ENCODE measurements at regions of chr3 and their contacts with region 1.

Region 1: DNA sequence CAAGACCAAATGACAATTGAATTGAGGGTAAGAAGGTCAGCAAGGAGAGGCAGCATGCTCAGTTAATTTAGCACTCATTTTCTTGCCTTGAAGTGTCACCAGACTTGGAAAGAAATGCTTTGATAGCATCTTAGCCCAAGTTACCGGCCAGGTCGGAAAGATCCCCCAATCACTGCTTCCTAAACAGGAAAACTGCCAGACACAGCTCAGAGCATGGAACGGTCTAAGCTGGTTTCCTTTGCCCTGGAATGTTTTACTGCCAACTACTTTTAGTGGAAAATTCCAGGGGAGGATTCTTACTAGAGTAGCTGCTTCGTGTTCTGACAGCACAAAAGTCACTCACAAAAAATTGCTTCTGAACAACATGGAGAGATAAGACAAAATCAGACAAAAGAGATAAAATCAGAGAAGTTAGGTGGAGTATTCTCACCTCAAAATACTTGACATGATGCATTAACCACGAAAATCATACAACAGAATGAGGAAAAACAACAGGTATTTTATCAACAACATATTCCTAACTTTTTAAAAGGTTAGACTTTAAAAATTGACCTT is 65.5 kb downstream of the CCR4 start:
- DNase-seq: no peak
- H3K4me3 ChIP-seq: no peak overlapping the region
- H3K4me3 Mint-ChIP-seq: peak overlapping the region; percentile 28 to 79 (median 55)
- H3K27ac ChIP-seq: peak overlapping the region; percentile 11
- H3K27ac Mint-ChIP-seq: peak overlapping the region; percentile 2 to 96 (median 82)
- H3K4me1 ChIP-seq: peaks cover 71% of the 10 kb centered on the region
- H3K4me1 Mint-ChIP-seq: peaks cover 58 to 96% (median 77%) of the 10 kb centered on the region in 4 donors
- H3K27me3 ChIP-seq: no peaks in the 10 kb centered on the region
- H3K27me3 Mint-ChIP-seq: no peaks in the 10 kb centered on the region

Region 2: DNA sequence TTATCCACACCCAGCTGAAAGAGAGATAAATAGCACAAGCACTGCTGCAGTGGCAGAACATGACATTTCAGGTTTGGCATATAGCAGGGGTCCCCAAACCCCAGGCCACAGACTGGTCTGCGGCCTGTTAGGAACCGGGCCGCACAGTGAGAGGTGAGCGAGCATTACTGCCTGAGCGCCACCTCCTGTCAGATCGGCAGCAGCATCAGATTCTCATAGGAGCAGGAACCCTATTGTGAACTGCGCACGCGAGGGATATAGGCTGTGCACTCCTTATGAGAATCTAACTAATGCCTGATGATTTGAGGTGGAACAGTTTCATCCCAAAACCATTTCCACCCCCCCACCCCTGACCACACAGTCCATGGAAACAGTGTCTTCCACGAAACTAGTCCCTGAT is 10.8 kb before region 1 on chr3:
- CTCF ChIA-PET with region 1: interaction called, 10 read pairs
- POLR2A ChIA-PET with region 1: interaction called, 20 read pairs
- intact Hi-C with region 1: loop called (anchors 1 kb)
- DNase-seq: peak; percentile 27 to 61 (median 51)
- H3K4me3 ChIP-seq: no peak overlapping the region
- H3K4me3 Mint-ChIP-seq: peak overlapping the region in 7 of 8 donors; percentile 20 to 62 (median 40)
- H3K27ac ChIP-seq: peak overlapping the region; percentile 0
- H3K27ac Mint-ChIP-seq: peak overlapping the region; percentile 73 to 94 (median 86)
- H3K4me1 ChIP-seq: peaks cover 78% of the 10 kb centered on the region
- H3K4me1 Mint-ChIP-seq: peaks cover 41 to 81% (median 66%) of the 10 kb centered on the region in 4 donors
- H3K27me3 ChIP-seq: no peaks in the 10 kb centered on the region
- H3K27me3 Mint-ChIP-seq: no peaks in the 10 kb centered on the region

Region 3: DNA sequence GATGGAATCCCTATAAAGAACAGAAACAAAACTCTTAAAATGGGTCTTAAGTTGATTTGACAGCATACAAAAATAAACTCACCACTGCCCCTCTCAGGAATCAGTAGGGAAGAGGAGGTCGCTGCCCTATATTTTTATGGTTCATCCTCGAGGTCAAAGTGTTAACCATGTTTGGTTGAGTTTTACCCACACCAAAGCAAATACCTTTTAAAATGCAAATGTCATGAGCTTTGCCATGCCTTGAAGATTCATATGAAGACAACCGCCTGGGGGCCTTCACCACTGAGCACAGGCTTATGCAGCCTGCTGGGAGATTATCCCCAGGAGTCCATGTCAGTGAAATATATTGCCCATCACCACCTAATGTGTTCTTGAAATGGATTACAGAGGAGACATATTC is 13.9 kb after region 1 on chr3:
- CTCF ChIA-PET with region 1: interaction called, 13 read pairs
- POLR2A ChIA-PET with region 1: interaction called, 7 read pairs
- intact Hi-C with region 1: no loop called
- DNase-seq: peak; percentile 58 to 77 (median 72)
- H3K4me3 ChIP-seq: no peak overlapping the region
- H3K4me3 Mint-ChIP-seq: peak overlapping the region in 7 of 8 donors; percentile 32 to 73 (median 54)
- H3K27ac ChIP-seq: no peak overlapping the region
- H3K27ac Mint-ChIP-seq: peak overlapping the region; percentile 52 to 94 (median 83)
- H3K4me1 ChIP-seq: peaks cover 29% of the 10 kb centered on the region
- H3K4me1 Mint-ChIP-seq: peaks cover 24 to 49% (median 31%) of the 10 kb centered on the region in 4 donors
- H3K27me3 ChIP-seq: no peaks in the 10 kb centered on the region
- H3K27me3 Mint-ChIP-seq: no peaks in the 10 kb centered on the region

Region 4: DNA sequence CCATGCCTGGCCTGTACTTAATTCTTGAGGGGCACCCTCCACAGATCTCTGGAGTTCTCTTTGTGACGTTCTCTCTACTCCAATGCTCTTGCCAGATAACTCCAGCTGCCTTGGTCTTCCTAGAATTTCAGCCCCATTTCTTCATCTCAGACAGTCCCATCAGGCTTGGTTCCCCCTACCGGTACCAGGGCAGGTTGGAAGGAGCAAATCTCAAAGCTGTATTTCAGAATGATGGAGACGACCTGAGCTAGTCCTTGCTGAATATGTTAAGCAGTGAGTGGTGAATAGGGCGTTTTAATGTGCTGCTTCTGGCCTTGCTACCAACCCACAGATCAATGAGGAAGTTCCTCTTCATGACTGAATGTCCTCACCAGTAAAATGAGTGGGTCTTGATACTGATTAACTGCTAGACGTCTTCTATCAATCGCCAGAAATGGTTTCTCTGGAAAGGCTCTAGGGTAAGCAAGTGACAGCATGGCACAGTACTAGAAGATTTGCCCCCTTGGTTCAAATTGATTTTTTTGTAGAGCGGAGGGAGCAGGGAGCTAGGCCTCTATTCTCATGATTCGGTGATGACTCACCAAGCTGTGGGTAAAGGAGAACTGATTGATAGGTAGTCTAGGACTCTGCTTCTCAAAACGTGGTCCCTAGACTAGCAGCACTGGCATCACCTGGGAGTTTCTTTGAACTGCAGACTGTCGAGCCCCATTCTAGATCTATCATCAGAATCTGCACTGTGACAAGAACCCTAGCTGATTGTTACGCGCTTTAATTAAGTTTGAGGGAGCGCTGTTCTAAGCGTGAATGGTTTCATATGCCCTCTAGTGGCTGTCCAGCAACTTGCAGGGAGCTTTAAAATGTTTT is 355.5 kb after region 1 on chr3:
- CTCF ChIA-PET with region 1: no interaction called
- POLR2A ChIA-PET with region 1: no interaction called
- intact Hi-C with region 1: no loop called
- DNase-seq: peak; percentile 39 to 57 (median 49)
- H3K4me3 ChIP-seq: no peak overlapping the region
- H3K4me3 Mint-ChIP-seq: peak overlapping the region in 1 of 8 donors; percentile 7
- H3K27ac ChIP-seq: no peak overlapping the region
- H3K27ac Mint-ChIP-seq: peak overlapping the region in 1 of 7 donors; percentile 51
- H3K4me1 ChIP-seq: no peaks in the 10 kb centered on the region
- H3K4me1 Mint-ChIP-seq: peaks cover 2 to 7% (median 5%) of the 10 kb centered on the region in 4 donors
- H3K27me3 ChIP-seq: no peaks in the 10 kb centered on the region
- H3K27me3 Mint-ChIP-seq: peaks cover 11 to 12% of the 10 kb centered on the region in 2 donors